Heart right ventricle (tissue), 16 donors: ENCODE measurements at regions of chr6 and their contacts with region 1.

Region 1: DNA sequence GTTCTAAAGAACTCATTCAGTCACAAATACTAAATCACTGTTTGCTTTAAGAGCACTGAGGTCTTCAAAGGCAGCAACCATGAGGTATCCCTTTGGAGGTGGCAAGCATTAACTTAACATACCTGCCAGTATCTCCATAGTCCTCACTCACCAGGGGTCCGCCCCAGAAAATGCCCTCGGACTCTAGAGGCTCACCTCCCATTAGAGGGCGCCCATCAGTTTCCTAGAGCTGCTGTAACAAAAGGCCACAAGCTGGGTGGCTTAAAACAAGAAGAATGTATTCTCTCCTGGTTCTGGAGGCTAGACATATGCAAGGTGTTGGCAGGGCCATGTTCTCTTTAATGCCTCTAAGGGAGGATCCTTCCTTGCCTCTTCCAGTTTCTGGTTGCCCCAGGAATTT is 12.0 kb upstream of the RNGTT start:
- DNase-seq: no peak
- ATAC-seq: no peak
- H3K4me3 ChIP-seq: no peak overlapping the region
- H3K27ac ChIP-seq: no peak overlapping the region
- H3K4me1 ChIP-seq: no peaks in the 10 kb centered on the region
- H3K27me3 ChIP-seq: no peaks in the 10 kb centered on the region
- CTCF ChIP-seq: no peak

Region 2: GRCh38 chr6:87350516-87350915 is 1624.9 kb before region 1 on chr6:
- intact Hi-C with region 1: no loop called
- DNase-seq: no peak
- ATAC-seq: no peak
- H3K4me3 ChIP-seq: no peak overlapping the region
- H3K27ac ChIP-seq: no peak overlapping the region
- H3K4me1 ChIP-seq: peaks cover 0 to 5% (median 0%) of the 10 kb centered on the region in 9 donors
- H3K27me3 ChIP-seq: no peaks in the 10 kb centered on the region
- CTCF ChIP-seq: no peak

Region 3: DNA sequence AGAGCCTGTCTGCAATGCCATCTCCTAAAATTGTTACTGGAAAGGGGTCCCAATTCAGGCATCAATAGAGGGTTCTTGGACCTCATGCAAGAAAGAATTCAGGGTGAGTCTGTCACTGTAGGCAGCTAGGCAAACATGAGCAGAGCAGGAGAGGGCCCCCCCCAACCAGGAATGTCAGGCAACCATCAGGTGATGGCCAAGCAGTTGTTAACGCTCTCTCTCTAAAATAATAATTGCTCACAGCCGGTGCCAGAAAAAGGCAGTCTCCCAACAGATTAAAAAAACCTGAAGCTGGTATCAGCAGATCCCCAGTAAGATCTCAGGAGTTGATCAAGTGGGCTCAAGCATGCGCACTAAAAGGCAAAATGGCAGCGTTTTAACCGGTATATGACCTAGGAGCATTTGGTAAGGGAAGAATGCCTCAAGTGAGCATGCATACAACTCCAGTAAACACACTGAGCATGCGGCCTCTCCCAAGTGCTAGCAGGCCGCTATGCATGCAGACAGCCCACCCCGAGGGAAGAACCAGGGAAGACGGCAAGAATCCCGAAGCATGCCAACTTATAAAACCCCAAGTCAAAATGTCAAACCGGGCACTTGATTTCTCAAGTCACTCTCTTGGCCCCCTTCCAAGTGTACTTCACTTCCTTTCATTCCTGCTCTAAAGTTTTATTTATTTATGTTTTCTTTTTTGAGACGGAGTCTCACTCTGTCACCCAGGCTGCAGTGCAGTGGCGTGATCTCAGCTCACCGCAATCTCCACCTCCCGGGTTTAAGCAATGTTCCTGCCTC is 32.0 kb after region 1 on chr6:
- intact Hi-C with region 1: no loop called
- DNase-seq: no peak
- ATAC-seq: no peak
- H3K4me3 ChIP-seq: peak overlapping the region in 1 of 10 donors; percentile 19
- H3K27ac ChIP-seq: peak overlapping the region in 1 of 10 donors; percentile 68
- H3K4me1 ChIP-seq: peaks cover 0 to 29% (median 0%) of the 10 kb centered on the region in 9 donors
- H3K27me3 ChIP-seq: no peaks in the 10 kb centered on the region
- CTCF ChIP-seq: no peak

Region 4: GRCh38 chr6:89610149-89610642 is 634.8 kb after region 1 on chr6:
- intact Hi-C with region 1: loop called in 1 of 10 experiments (anchors 10 kb)
- DNase-seq: peak; percentile 67 to 74
- ATAC-seq: peak in 7 of 8 donors; percentile 59 to 84 (median 77)
- H3K4me3 ChIP-seq: no peak overlapping the region
- H3K27ac ChIP-seq: no peak overlapping the region
- H3K4me1 ChIP-seq: no peaks in the 10 kb centered on the region
- H3K27me3 ChIP-seq: no peaks in the 10 kb centered on the region
- CTCF ChIP-seq: peak; percentile 61 to 91 (median 87)